Activated B cell treated with CpG ODN at 0.5 μM for 24 hours (primary cell): ENCODE measurements at regions of chr20 and their contacts with region 1.

Region 1: DNA sequence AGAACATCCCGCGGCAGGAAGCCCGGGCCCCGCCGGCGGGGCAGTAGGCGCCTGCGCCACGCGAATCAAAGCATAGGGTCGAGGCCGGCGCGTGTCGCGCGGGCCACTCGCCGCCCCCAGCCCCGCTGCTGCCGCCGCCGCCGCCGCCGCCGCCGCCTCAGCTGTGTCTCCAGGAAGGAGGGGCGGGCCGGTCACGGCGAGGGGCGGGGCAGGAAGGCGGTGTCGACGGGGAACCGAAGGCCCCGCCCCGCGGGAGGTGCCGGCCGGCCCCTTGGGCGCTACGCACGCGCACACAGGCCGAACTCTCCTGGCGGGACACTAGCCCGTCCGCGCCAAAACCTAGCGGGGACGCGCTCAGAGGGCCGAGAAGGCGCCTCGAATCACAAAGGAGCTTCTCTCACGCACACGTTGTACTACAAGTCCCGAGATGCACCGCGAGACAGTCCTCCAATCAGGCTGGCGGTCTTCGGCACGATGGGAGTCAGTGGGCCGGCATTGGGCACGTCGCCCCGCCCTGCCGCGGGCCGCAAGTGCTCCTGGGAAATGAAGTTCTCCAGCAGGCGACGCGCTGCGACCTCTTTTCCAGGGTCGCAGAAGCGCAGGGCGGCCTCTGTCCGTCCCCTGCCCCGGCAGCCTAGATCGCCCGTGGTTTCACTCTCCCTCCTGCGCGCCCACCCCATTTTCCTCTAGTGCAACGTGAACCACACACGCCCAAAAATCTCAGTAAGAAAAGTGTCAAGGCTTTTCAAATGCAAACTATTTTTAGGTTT is at the start of gene RALGAPA2:
- DNase-seq: peak; percentile 97
- ATAC-seq: peak; percentile 96
- H3K4me3 Mint-ChIP-seq: peak within 1 kb of the TSS; percentile 90
- H3K27ac Mint-ChIP-seq: peak within 1 kb of the TSS; percentile 92
- H3K4me1 Mint-ChIP-seq: peaks cover 26% of the 10 kb centered on the region
- H3K27me3 Mint-ChIP-seq: no peaks in the 10 kb centered on the region
- CTCF ChIP-seq: no peak
- total RNA-seq, gene RALGAPA2: 16.5 and 19.2 TPM in 2 replicates

Region 2: DNA sequence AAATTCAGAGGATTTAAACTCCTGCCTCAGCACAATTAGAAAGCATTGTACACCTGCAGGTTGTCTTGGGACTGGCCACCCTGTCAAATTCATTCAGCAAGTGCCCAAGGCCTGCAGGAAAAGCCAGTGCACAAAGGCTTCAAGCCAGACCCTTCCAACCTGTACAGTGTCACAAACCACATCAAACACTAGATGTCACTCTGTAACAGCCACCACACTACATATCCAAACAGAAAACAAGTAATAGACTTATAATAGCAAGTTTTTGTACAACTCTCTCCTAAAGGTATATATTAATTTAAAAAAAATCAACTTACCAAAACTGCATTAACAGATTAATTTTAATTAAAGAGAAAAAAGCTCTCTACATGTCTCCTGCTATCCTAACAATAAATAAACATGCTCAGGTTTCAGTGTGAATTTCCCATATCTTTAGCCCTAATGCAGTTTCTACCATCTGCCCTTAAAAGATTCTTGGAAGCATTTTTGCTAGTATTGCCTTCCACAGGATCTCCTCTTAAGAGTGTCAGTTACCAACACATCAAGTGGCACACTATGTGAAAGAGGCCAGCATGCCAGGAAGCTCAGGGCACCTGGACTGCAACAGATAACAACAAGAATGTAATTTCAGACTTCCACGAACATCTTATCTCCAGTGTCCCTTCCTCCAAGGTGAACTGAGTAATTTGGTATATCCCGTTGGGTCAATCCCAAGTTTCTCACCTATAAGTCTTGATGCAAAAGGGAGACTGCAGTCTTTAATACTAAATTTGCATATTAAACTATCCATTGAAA is 47.7 kb before region 1 on chr20:
- CTCF ChIA-PET with region 1: no interaction called
- POLR2A ChIA-PET with region 1: interaction called, 4 read pairs
- intact Hi-C with region 1: loop called (anchors 1 kb)
- DNase-seq: no peak
- ATAC-seq: no peak
- H3K4me3 Mint-ChIP-seq: no peak overlapping the region
- H3K27ac Mint-ChIP-seq: no peak overlapping the region
- H3K4me1 Mint-ChIP-seq: peaks cover 36% of the 10 kb centered on the region
- H3K27me3 Mint-ChIP-seq: no peaks in the 10 kb centered on the region
- CTCF ChIP-seq: no peak

Region 3: GRCh38 chr20:21303061-21303871 is 590.6 kb after region 1 on chr20 and contains the start of gene XRN2:
- CTCF ChIA-PET with region 1: no interaction called
- POLR2A ChIA-PET with region 1: no interaction called
- intact Hi-C with region 1: loop called (anchors 5 kb)
- DNase-seq: peak; percentile 93
- ATAC-seq: peak; percentile 85
- H3K4me3 Mint-ChIP-seq: peak within 1 kb of the TSS; percentile 98
- H3K27ac Mint-ChIP-seq: peak within 1 kb of the TSS; percentile 98
- H3K4me1 Mint-ChIP-seq: peaks cover 30% of the 10 kb centered on the region
- H3K27me3 Mint-ChIP-seq: no peaks in the 10 kb centered on the region
- CTCF ChIP-seq: no peak
- total RNA-seq, gene XRN2: 60.7 and 61.0 TPM in 2 replicates